Psoas muscle (tissue), 8 donors: ENCODE measurements at regions of chr7 and their contacts with region 1.

Region 1: GRCh38 chr7:44980393-44981034 is 1.7 kb upstream of the MYO1G start:
- DNase-seq: no peak
- ATAC-seq: peak in 1 of 4 donors; percentile 29
- H3K4me3 ChIP-seq: no peak overlapping the region
- H3K27ac ChIP-seq: peak overlapping the region; percentile 36
- H3K4me1 ChIP-seq: peaks cover 12% of the 10 kb centered on the region
- H3K27me3 ChIP-seq: no peaks in the 10 kb centered on the region
- CTCF ChIP-seq: no peak

Region 2: GRCh38 chr7:44944821-44945220 is 35.7 kb before region 1 on chr7:
- intact Hi-C with region 1: no loop called
- DNase-seq: no peak
- ATAC-seq: peak in 3 of 4 donors; percentile 78 to 97 (median 94)
- H3K4me3 ChIP-seq: no peak overlapping the region
- H3K27ac ChIP-seq: no peak overlapping the region
- H3K4me1 ChIP-seq: no peaks in the 10 kb centered on the region
- H3K27me3 ChIP-seq: no peaks in the 10 kb centered on the region
- CTCF ChIP-seq: no peak

Region 3: DNA sequence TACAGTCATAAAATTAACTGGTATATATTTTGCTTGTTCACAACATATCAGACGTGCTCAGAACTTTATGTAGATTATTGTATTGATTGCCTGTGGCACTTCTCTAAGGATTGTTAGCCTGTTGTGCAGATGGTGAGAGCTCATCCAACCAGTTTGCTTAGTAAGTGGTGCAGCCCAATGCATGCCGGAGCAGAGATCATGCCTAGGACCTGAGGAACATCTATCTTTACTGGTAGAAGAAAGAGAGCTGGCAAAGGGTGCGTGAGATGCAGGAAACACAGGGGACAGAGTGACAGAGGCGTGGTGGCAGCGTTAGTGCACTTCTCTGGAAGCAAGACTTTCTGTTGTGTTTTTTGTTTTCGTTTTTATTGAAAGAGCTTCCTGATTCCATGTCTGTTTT is 55.4 kb after region 1 on chr7:
- intact Hi-C with region 1: loop called in 1 of 2 experiments (anchors 2 kb)
- DNase-seq: no peak
- ATAC-seq: no peak
- H3K4me3 ChIP-seq: no peak overlapping the region
- H3K27ac ChIP-seq: no peak overlapping the region
- H3K4me1 ChIP-seq: peaks cover 15% of the 10 kb centered on the region
- H3K27me3 ChIP-seq: no peaks in the 10 kb centered on the region
- CTCF ChIP-seq: no peak